ENCODE measurements at regions of chr9 and their contacts with region 1.

Region 1: GRCh38 chr9:113578882-113579282 is 115.4 kb downstream of the RGS3 start:
- DNase-seq: peak; percentile 88 to 90
- ATAC-seq: peak; percentile 62 to 80 (median 78)
- H3K4me3 ChIP-seq: no peak overlapping the region
- H3K4me3 Mint-ChIP-seq: peak overlapping the region; percentile 77
- H3K27ac ChIP-seq: peak overlapping the region; percentile 81
- H3K27ac Mint-ChIP-seq: peak overlapping the region; percentile 92 to 93
- H3K4me1 ChIP-seq: peaks cover 86% of the 10 kb centered on the region
- H3K4me1 Mint-ChIP-seq: peaks cover 88 to 100% of the 10 kb centered on the region in 2 donors
- H3K27me3 ChIP-seq: no peaks in the 10 kb centered on the region
- H3K27me3 Mint-ChIP-seq: no peaks in the 10 kb centered on the region
- CTCF ChIP-seq: no peak

Region 2: GRCh38 chr9:113275157-113276131 is 303.4 kb before region 1 on chr9 and contains the starts of genes CDC26 and PRPF4:
- intact Hi-C with region 1: loop called (anchors 1 kb)
- DNase-seq: peak; percentile 92 to 99
- ATAC-seq: peak; percentile 94 to 99 (median 97)
- H3K4me3 ChIP-seq: peak within 1 kb of the TSS; percentile 89
- H3K4me3 Mint-ChIP-seq: no peak within 1 kb of the TSS
- H3K27ac ChIP-seq: peak within 1 kb of the TSS; percentile 95
- H3K27ac Mint-ChIP-seq: no peak within 1 kb of the TSS
- H3K4me1 ChIP-seq: peaks cover 8% of the 10 kb centered on the region
- H3K4me1 Mint-ChIP-seq: peaks cover 8 to 15% of the 10 kb centered on the region in 2 donors
- H3K27me3 ChIP-seq: no peaks in the 10 kb centered on the region
- H3K27me3 Mint-ChIP-seq: no peaks in the 10 kb centered on the region
- CTCF ChIP-seq: no peak
- total RNA-seq, gene CDC26: 16.8 to 24.8 (median 21.5) TPM
- total RNA-seq, gene PRPF4: 16.9 to 23.2 (median 21.1) TPM

Region 3: GRCh38 chr9:113446323-113446740 is 132.6 kb before region 1 on chr9:
- intact Hi-C with region 1: loop called (anchors 2 kb)
- DNase-seq: peak in 1 of 2 donors; percentile 68
- ATAC-seq: peak in 2 of 3 donors; percentile 52 to 66
- H3K4me3 ChIP-seq: no peak overlapping the region
- H3K4me3 Mint-ChIP-seq: no peak overlapping the region
- H3K27ac ChIP-seq: no peak overlapping the region
- H3K27ac Mint-ChIP-seq: no peak overlapping the region
- H3K4me1 ChIP-seq: no peaks in the 10 kb centered on the region
- H3K4me1 Mint-ChIP-seq: peaks cover 0 to 5% of the 10 kb centered on the region in 2 donors
- H3K27me3 ChIP-seq: no peaks in the 10 kb centered on the region
- H3K27me3 Mint-ChIP-seq: no peaks in the 10 kb centered on the region
- CTCF ChIP-seq: peak; percentile 82